ENCODE measurements at regions of chr1 and their contacts with region 1.

Region 1: GRCh38 chr1:110087812-110088738 is 17.6 kb upstream of the ALX3 start:
- DNase-seq: peak; percentile 60
- ATAC-seq: peak; percentile 76
- H3K4me3 Mint-ChIP-seq: no peak overlapping the region
- H3K27ac Mint-ChIP-seq: no peak overlapping the region
- H3K4me1 Mint-ChIP-seq: peaks cover 33% of the 10 kb centered on the region
- H3K27me3 Mint-ChIP-seq: peaks cover 50% of the 10 kb centered on the region
- CTCF ChIP-seq: peak; percentile 71

Region 2: GRCh38 chr1:109816175-109816811 is 271.8 kb before region 1 on chr1:
- CTCF ChIA-PET with region 1: no interaction called
- POLR2A ChIA-PET with region 1: no interaction called
- DNase-seq: no peak
- ATAC-seq: no peak
- H3K4me3 Mint-ChIP-seq: no peak overlapping the region
- H3K27ac Mint-ChIP-seq: no peak overlapping the region
- H3K4me1 Mint-ChIP-seq: no peaks in the 10 kb centered on the region
- H3K27me3 Mint-ChIP-seq: no peaks in the 10 kb centered on the region; the same call in 1 of the 2 replicates
- CTCF ChIP-seq: no peak

Region 3: DNA sequence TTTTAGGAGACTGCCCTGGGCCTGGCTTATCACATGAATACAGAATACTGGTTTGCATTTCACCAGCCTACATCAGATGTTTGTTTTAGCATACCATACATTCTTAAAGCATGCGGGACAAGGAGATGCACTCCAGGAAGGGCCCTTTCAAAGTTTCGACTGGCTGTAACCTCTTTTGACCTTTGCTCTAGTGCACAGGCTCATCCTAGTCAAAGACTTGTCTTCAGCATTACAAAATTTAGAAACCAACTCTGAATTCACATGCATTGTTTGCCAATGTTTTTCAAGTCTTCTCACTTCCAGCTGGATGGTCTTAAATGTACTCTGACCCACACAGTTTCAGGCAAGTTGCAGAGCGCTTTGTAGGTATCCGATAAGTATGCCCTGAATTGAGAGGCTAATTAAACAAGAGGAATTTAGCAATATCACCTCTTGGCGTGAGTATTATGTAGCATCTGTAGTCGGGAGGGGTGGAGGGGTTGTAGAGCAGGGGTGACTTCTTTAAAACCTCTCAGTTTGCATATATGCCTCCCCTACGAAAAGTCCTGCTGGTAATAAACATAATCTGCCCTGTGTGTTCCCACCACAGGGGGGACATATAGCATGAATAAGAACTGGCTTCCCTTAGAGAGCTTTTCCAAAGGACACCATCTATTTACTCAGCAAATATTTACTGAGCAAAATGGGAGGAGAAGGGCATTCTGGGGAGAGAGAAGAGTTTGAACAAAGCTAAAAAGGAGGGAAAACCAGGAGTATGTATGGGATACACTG is 127.9 kb before region 1 on chr1:
- CTCF ChIA-PET with region 1: no interaction called
- POLR2A ChIA-PET with region 1: no interaction called
- DNase-seq: peak; percentile 26
- ATAC-seq: peak; percentile 93
- H3K4me3 Mint-ChIP-seq: peak overlapping the region; percentile 11
- H3K27ac Mint-ChIP-seq: peak overlapping the region; percentile 50
- H3K4me1 Mint-ChIP-seq: peaks cover 36% of the 10 kb centered on the region
- H3K27me3 Mint-ChIP-seq: peaks cover 73% of the 10 kb centered on the region
- CTCF ChIP-seq: no peak

Region 4: GRCh38 chr1:110053557-110054428 is 34.3 kb before region 1 on chr1:
- CTCF ChIA-PET with region 1: interaction called, 24 read pairs
- POLR2A ChIA-PET with region 1: no interaction called
- DNase-seq: peak; percentile 86
- ATAC-seq: peak; percentile 94
- H3K4me3 Mint-ChIP-seq: no peak overlapping the region
- H3K27ac Mint-ChIP-seq: no peak overlapping the region; the same call in 1 of the 2 replicates
- H3K4me1 Mint-ChIP-seq: no peaks in the 10 kb centered on the region
- H3K27me3 Mint-ChIP-seq: no peaks in the 10 kb centered on the region
- CTCF ChIP-seq: peak; percentile 95

Region 5: DNA sequence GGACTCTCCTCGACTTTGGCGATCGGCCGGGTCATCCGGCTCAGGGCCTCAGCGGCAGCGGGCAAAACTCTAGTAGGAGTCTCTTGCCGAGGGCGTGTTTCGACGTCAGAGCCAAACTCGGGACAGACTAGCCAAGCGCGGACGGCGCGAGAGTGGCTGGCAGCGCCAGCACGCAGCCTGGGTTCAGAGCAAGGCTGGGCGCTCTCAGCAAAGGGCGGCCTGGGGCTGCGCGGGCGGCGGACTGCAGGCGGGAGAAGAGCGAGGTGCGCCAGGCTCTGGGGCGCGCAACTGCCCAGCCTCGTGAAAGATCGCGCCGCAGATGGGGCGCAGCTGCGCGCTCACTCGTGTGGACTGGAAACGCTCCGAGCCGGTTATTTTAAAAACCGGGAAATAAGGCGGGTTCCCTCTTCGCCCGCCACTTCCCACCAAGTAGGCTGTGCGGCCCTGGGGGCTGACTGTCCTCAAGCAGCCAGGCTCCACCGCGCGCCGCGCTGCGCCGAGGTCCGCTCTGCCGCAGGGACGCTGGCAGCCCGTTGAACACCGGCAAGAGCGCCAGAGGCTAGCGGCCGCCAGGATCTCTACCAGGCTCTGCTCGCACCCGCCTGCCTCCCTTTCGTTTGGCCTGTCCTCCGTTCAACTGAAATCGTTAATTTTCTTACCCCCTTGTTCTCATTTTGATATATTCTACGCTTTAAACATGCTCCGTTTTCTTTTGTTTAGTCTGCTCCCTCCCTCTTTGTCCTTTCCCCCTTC is 20.0 kb before region 1 on chr1:
- CTCF ChIA-PET with region 1: interaction called, 46 read pairs
- POLR2A ChIA-PET with region 1: no interaction called
- DNase-seq: peak; percentile 61
- ATAC-seq: peak; percentile 34
- H3K4me3 Mint-ChIP-seq: peak overlapping the region; percentile 67
- H3K27ac Mint-ChIP-seq: no peak overlapping the region
- H3K4me1 Mint-ChIP-seq: peaks cover 15% of the 10 kb centered on the region
- H3K27me3 Mint-ChIP-seq: peaks cover 87% of the 10 kb centered on the region
- CTCF ChIP-seq: no peak

Region 6: GRCh38 chr1:110118636-110119615 is 30.9 kb after region 1 on chr1:
- CTCF ChIA-PET with region 1: interaction called, 95 read pairs
- POLR2A ChIA-PET with region 1: no interaction called
- DNase-seq: no peak
- ATAC-seq: no peak
- H3K4me3 Mint-ChIP-seq: no peak overlapping the region
- H3K27ac Mint-ChIP-seq: no peak overlapping the region
- H3K4me1 Mint-ChIP-seq: 0 out of 2 replicates have a peak, but pooled peaks cover 4% of the 10 kb centered on the region
- H3K27me3 Mint-ChIP-seq: peaks cover 15% of the 10 kb centered on the region
- CTCF ChIP-seq: no peak

Region 7: DNA sequence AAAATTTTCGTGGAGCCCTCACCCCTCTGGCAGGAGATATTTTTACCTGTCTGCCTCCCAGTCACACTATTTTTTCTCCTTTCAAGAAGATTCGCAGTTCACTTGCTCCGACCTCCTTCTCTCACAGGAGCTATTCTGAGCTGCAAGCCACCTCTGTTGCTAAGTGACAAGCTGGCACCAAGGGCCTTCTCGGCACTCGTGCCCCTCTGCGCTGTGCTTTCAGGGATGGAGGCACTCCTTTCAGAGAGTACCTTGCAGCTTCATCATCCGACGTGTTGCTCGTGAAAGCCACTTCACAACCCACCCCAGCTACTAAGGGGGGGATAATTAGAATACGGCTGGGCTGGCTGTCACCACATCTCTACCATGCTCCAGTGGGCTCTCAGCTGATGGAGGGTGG is 73.8 kb after region 1 on chr1:
- CTCF ChIA-PET with region 1: interaction called, 11 read pairs
- POLR2A ChIA-PET with region 1: no interaction called
- DNase-seq: no peak
- ATAC-seq: no peak
- H3K4me3 Mint-ChIP-seq: no peak overlapping the region
- H3K27ac Mint-ChIP-seq: no peak overlapping the region
- H3K4me1 Mint-ChIP-seq: peaks cover 11% of the 10 kb centered on the region
- H3K27me3 Mint-ChIP-seq: peaks cover 10% of the 10 kb centered on the region
- CTCF ChIP-seq: no peak

Region 8: GRCh38 chr1:110188035-110188618 is 100.1 kb after region 1 on chr1:
- CTCF ChIA-PET with region 1: no interaction called
- POLR2A ChIA-PET with region 1: no interaction called
- DNase-seq: no peak
- ATAC-seq: no peak
- H3K4me3 Mint-ChIP-seq: no peak overlapping the region
- H3K27ac Mint-ChIP-seq: no peak overlapping the region
- H3K4me1 Mint-ChIP-seq: peaks cover 17% of the 10 kb centered on the region
- H3K27me3 Mint-ChIP-seq: no peaks in the 10 kb centered on the region
- CTCF ChIP-seq: no peak